ENCODE measurements at regions of chr17 and their contacts with region 1.

Region 1: GRCh38 chr17:63442511-63443035 is 3.5 kb downstream of the CYB561 start:
- DNase-seq: no peak
- ATAC-seq: no peak
- H3K4me3 ChIP-seq: no peak overlapping the region
- H3K27ac ChIP-seq: no peak overlapping the region
- H3K4me1 ChIP-seq: peaks cover 28% of the 10 kb centered on the region
- H3K27me3 ChIP-seq: no peaks in the 10 kb centered on the region
- CTCF ChIP-seq: no peak

Region 2: DNA sequence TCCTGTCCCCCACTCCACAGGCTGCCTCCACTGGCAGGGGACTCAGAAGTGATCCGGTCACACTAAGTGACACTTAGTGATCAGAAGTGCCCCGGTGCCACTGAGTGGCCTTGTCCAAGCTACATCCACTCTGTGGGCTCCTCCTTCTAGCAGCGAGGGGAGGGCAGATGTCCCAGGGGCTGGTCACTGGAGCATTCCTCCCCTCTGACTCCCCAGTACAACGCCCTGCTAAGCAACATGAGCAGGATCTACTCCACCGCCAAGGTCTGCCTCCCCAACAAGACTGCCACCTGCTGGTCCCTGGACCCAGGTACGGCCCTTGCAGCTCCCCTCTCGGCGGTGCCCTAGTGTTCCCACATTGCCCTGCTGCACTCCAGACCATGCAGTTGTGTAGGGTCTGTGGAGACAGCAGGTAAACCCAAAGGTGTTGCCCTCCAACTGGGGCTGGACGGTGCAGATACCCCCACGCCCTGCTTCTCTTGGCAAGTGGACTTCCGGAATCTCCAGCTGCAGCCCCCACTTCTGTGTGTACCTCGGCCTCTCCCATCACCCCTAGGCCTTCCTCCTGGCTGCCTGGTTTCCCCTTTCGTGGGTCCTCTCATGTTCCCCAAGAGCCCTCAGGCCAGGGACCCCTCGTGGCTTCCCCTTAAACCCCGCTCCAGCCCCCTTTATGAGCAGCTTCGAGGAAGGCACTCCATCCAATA is 36.4 kb after region 1 on chr17:
- intact Hi-C with region 1: loop called (anchors 5 kb)
- DNase-seq: peak; percentile 90
- ATAC-seq: peak; percentile 90
- H3K4me3 ChIP-seq: peak overlapping the region; percentile 51
- H3K27ac ChIP-seq: no peak overlapping the region
- H3K4me1 ChIP-seq: peaks cover 32% of the 10 kb centered on the region
- H3K27me3 ChIP-seq: peaks cover 16% of the 10 kb centered on the region
- CTCF ChIP-seq: peak; percentile 77

Region 3: DNA sequence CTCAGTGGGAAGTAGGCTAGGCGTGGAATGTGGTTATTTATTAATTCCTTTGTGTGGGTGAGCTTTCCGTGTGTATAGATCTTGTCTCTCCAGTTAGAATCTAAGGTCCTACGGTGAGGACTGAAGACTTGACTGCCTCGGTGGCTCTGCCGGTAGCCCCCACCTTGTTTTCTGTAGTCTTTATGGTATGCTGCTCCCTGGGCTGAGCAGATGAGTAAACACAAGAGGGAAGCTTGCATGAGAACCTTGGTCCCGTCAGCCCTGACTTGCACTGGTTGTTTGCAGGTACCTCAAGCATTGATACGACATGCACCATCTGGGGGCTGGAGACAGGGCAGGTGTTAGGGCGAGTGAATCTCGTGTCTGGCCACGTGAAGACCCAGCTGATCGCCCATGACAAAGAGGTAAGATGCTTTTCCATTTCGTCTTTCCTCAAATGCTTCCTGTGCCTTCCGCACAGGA is 137.0 kb after region 1 on chr17:
- intact Hi-C with region 1: no loop called
- DNase-seq: no peak
- ATAC-seq: no peak
- H3K4me3 ChIP-seq: no peak overlapping the region
- H3K27ac ChIP-seq: peak overlapping the region; percentile 51
- H3K4me1 ChIP-seq: no peaks in the 10 kb centered on the region
- H3K27me3 ChIP-seq: no peaks in the 10 kb centered on the region
- CTCF ChIP-seq: no peak